HepG2 (cell line): ENCODE measurements at regions of chr2 and their contacts with region 1.

Region 1: DNA sequence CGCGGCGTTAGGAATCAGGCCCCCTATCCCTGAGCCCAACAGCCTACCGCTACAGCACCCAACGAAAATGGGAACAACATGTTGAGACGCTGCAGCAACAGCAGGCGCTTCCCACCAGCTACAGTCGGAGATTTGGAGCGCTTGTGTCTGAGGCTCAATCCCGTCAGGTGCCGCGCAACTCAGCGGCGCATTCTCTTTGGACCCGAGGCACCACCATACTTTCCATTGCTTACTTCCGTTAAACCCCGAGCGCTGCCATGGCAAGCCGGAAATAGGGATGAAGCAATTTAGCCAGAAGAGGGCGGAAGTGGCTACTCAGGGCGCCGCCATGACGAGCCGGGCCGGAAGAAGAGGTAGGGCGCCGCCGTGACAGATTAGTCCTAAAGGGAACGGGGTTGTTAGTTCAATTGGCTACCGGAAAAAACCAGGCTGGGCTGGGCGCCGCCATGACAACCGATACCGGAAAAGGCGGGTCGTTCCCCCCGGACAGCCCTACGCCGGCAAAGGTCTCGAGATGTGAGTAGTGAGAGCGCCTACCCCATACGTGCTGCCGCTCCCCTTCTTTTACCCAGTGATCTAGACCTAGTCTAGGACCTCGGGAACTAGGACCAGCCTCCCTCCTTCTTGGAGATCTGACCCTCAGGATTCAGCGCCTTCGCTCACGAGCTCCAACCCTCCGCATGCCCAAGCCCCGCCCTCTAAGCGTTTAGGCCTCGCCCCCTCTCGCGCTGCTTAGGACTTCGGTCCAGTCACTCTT is at the start of gene CHCHD5:
- DNase-seq: peak; percentile 98
- ATAC-seq: peak; percentile 89
- H3K4me3 ChIP-seq: peak within 1 kb of the TSS; percentile 76 to 95 (median 87)
- H3K27ac ChIP-seq: peak within 1 kb of the TSS; percentile 97
- H3K4me1 ChIP-seq: peaks cover 40% of the 10 kb centered on the region
- H3K27me3 ChIP-seq: peaks cover 0 to 4% of the 10 kb centered on the region in 2 experiments; a peak in 1 of 5 replicates
- CTCF ChIP-seq: peak; percentile 60
- EP300 ChIP-seq: peak in 1 of 2 experiments; percentile 58; a peak in 3 of 4 replicates
- POLR2A ChIP-seq: peak; percentile 88 to 95
- RAD21 ChIP-seq: no peak; the same call in 1 of the 2 replicates
- total RNA-seq, gene CHCHD5: 22.8 and 23.9 TPM in 2 replicates

Region 2: GRCh38 chr2:112542123-112542983 is 42.0 kb before region 1 on chr2 and contains the start of gene POLR1B:
- CTCF ChIA-PET with region 1: no interaction called
- POLR2A ChIA-PET with region 1: interaction called, 9 read pairs
- in situ Hi-C with region 1: no loop called
- intact Hi-C with region 1: loop called (anchors 5 kb)
- DNase-seq: peak; percentile 89
- ATAC-seq: peak; percentile 93
- H3K4me3 ChIP-seq: peak within 1 kb of the TSS; percentile 73 to 96 (median 86)
- H3K27ac ChIP-seq: peak within 1 kb of the TSS; percentile 84
- H3K4me1 ChIP-seq: peaks cover 26% of the 10 kb centered on the region
- H3K27me3 ChIP-seq: no peaks in the 10 kb centered on the region; a peak in 1 of 5 replicates
- CTCF ChIP-seq: peak; percentile 34; the same call in 1 of the 2 replicates
- EP300 ChIP-seq: no peak; a peak in 1 of 4 replicates
- POLR2A ChIP-seq: peak; percentile 88 to 91
- RAD21 ChIP-seq: peak; percentile 44
- total RNA-seq, gene POLR1B: 46.0 and 70.8 TPM in 2 replicates